ENCODE measurements at regions of chr1 and their contacts with region 1.

Region 1: DNA sequence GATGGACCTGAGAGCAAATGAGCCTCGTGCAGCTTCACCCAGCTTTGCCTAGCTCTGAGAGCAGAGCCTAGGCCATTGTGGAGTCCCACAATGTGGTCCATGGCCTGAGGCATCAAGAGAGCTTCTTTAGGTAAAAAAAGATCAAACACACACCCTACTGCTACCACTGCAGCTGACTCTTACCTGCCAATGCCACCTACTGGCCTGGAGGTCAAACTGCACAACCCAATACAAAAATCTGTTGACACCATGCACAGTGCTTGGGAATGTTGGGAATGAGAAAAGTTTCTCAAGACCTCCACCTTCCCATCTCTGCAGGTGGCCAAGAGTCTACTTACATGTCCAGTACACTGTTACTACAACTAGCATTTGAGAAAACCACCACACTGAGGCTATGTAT is 60.6 kb downstream of the UCHL5 start:
- DNase-seq: no peak
- H3K4me3 ChIP-seq: no peak overlapping the region
- H3K27ac ChIP-seq: no peak overlapping the region
- H3K4me1 ChIP-seq: no peaks in the 10 kb centered on the region
- H3K27me3 ChIP-seq: no peaks in the 10 kb centered on the region
- CTCF ChIP-seq: peak; percentile 56 to 77 (median 56)
- EP300 ChIP-seq: no peak
- POLR2A ChIP-seq: no peak
- RAD21 ChIP-seq: peak; percentile 73 to 75

Region 2: GRCh38 chr1:193013005-193013404 is 14.5 kb after region 1 on chr1:
- CTCF ChIA-PET with region 1: interaction called, 13 read pairs
- POLR2A ChIA-PET with region 1: interaction called, 3 read pairs
- DNase-seq: no peak
- H3K4me3 ChIP-seq: no peak overlapping the region
- H3K27ac ChIP-seq: no peak overlapping the region
- H3K4me1 ChIP-seq: no peaks in the 10 kb centered on the region
- H3K27me3 ChIP-seq: peaks cover 0 to 1% (median 0%) of the 10 kb centered on the region in 4 experiments; a peak in 1 of 7 replicates
- CTCF ChIP-seq: no peak
- EP300 ChIP-seq: no peak
- POLR2A ChIP-seq: no peak
- RAD21 ChIP-seq: no peak